MCF 10A (cell line): ENCODE measurements at regions of chr10 and their contacts with region 1.

Region 1: DNA sequence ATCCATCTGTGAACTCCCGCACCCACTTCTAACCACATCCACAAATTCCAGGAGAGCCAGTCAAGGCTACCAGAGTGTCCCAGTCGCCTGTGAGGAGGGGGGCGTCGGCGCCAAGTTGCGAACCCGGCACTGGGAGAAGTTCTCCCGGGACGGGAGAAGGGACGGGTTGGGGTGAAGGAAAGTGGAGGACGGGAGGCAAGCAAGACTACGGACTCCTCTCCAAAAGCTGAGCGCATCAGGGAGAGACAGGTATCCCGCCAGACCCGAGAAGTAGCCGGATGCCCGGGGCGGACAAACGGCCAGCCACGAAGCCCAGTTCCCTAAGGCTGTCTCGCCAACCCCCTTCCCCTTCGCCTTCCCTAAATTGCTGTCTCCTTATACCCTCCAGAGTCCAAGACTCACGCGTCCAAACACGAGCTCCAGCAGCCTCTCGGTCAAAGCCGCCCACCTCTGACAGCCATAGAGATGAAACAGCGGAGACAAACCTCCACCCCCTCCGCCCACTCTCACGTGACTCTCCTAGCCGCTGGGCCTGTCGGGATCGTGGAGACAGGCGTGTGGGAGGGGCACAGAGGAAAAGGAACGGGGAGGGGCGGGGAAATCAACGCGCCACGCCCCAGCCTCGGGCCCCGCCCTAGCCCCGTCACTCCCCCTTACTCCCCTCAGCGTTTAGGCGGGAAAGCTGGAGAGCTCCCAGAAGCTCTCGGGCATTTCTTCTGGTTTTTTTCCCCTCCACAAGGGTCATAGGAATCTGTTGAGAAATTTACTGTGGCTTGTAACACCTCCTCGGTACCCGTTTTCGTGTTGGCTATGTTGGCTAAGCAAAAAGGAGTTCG is at the start of gene MICU1:
- DNase-seq: peak; percentile 96
- H3K4me3 Mint-ChIP-seq: peak within 1 kb of the TSS; percentile 75
- H3K27ac Mint-ChIP-seq: peak within 1 kb of the TSS; percentile 26
- H3K4me1 Mint-ChIP-seq: peaks cover 10% of the 10 kb centered on the region
- H3K27me3 Mint-ChIP-seq: no peaks in the 10 kb centered on the region
- CTCF ChIP-seq: no peak
- total RNA-seq, gene MICU1: 25.5 and 34.8 TPM in 2 replicates

Region 2: GRCh38 chr10:72466018-72466417 is 159.8 kb before region 1 on chr10:
- CTCF ChIA-PET with region 1: no interaction called
- POLR2A ChIA-PET with region 1: no interaction called
- intact Hi-C with region 1: no loop called
- DNase-seq: no peak
- H3K4me3 Mint-ChIP-seq: no peak overlapping the region
- H3K27ac Mint-ChIP-seq: no peak overlapping the region
- H3K4me1 Mint-ChIP-seq: no peaks in the 10 kb centered on the region
- H3K27me3 Mint-ChIP-seq: no peaks in the 10 kb centered on the region
- CTCF ChIP-seq: no peak

Region 3: GRCh38 chr10:72612203-72612826 is 13.5 kb before region 1 on chr10:
- CTCF ChIA-PET with region 1: no interaction called
- POLR2A ChIA-PET with region 1: interaction called, 17 read pairs
- intact Hi-C with region 1: no loop called
- DNase-seq: peak; percentile 49
- H3K4me3 Mint-ChIP-seq: no peak overlapping the region
- H3K27ac Mint-ChIP-seq: peak overlapping the region; percentile 61
- H3K4me1 Mint-ChIP-seq: no peaks in the 10 kb centered on the region
- H3K27me3 Mint-ChIP-seq: no peaks in the 10 kb centered on the region
- CTCF ChIP-seq: no peak

Region 4: GRCh38 chr10:72679838-72680241 is 54.0 kb after region 1 on chr10:
- CTCF ChIA-PET with region 1: no interaction called
- POLR2A ChIA-PET with region 1: interaction called, 13 read pairs
- intact Hi-C with region 1: no loop called
- DNase-seq: no peak
- H3K4me3 Mint-ChIP-seq: no peak overlapping the region
- H3K27ac Mint-ChIP-seq: no peak overlapping the region
- H3K4me1 Mint-ChIP-seq: peaks cover 7% of the 10 kb centered on the region
- H3K27me3 Mint-ChIP-seq: no peaks in the 10 kb centered on the region
- CTCF ChIP-seq: no peak

Region 5: DNA sequence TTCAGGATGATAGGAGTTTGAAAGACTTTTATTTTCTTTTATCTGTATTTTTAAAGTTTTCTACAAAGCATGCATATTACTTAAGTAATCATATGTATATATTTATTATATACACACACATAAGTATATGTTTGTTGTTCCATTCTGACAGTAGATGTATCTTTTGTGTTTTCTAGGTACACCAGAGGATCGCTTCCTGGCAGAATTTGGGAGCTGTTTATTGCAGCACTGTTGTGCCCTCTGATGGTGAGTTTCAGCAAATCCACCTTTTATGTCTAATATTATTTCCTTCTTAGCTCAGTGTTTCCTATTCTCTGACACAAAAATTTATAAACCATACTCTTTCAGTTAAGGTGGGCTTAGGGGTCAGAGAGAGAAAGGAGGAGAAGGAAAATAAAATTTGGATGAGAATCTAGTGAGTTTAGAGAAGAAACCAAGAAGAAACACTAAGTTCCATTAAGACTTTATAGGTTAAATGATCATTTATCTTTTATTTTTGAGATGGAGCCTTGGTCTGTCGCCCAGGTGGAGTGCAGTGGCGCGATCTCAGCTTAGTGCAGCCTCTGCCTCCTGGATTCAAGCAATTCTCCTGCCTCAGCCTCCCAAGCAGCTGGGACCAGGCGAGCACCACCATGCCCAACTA is 208.5 kb after region 1 on chr10:
- CTCF ChIA-PET with region 1: no interaction called
- POLR2A ChIA-PET with region 1: interaction called, 3 read pairs
- intact Hi-C with region 1: loop called (anchors 5 kb)
- DNase-seq: peak; percentile 75
- H3K4me3 Mint-ChIP-seq: no peak overlapping the region
- H3K27ac Mint-ChIP-seq: no peak overlapping the region
- H3K4me1 Mint-ChIP-seq: peaks cover 8% of the 10 kb centered on the region
- H3K27me3 Mint-ChIP-seq: no peaks in the 10 kb centered on the region
- CTCF ChIP-seq: peak; percentile 70